CD14-positive monocyte (primary cell): ENCODE measurements at regions of chr20 and their contacts with region 1.

Region 1: GRCh38 chr20:33719989-33720709 is at the start of gene PXMP4:
- DNase-seq: peak; percentile 95 to 99 (median 96)
- H3K4me3 ChIP-seq: peak within 1 kb of the TSS; percentile 60 to 90 (median 79)
- H3K4me3 Mint-ChIP-seq: peak within 1 kb of the TSS; percentile 91 to 96
- H3K27ac ChIP-seq: peak within 1 kb of the TSS; percentile 60 to 84
- H3K27ac Mint-ChIP-seq: peak within 1 kb of the TSS; percentile 85 to 95 (median 89)
- H3K4me1 ChIP-seq: peaks cover 23 to 32% of the 10 kb centered on the region in 2 donors
- H3K4me1 Mint-ChIP-seq: peaks cover 43% of the 10 kb centered on the region
- H3K27me3 ChIP-seq: no peaks in the 10 kb centered on the region
- H3K27me3 Mint-ChIP-seq: peaks cover 0 to 4% (median 3%) of the 10 kb centered on the region in 3 donors
- CTCF ChIP-seq: no peak
- polyA plus RNA-seq, gene PXMP4: 4.9 to 11.4 (median 9.0) TPM

Region 2: GRCh38 chr20:33686100-33686983 is 33.8 kb before region 1 on chr20 and contains the start of gene E2F1:
- intact Hi-C with region 1: loop called in 1 of 2 experiments (anchors 5 kb)
- DNase-seq: peak; percentile 86 to 93 (median 89)
- H3K4me3 ChIP-seq: peak within 1 kb of the TSS; percentile 10 to 72 (median 32)
- H3K4me3 Mint-ChIP-seq: peak within 1 kb of the TSS; percentile 79 to 94
- H3K27ac ChIP-seq: peak within 1 kb of the TSS in 1 of 2 donors; percentile 52
- H3K27ac Mint-ChIP-seq: peak within 1 kb of the TSS; percentile 73 to 92 (median 86)
- H3K4me1 ChIP-seq: peaks cover 30 to 50% of the 10 kb centered on the region in 2 donors
- H3K4me1 Mint-ChIP-seq: peaks cover 51% of the 10 kb centered on the region
- H3K27me3 ChIP-seq: no peaks in the 10 kb centered on the region
- H3K27me3 Mint-ChIP-seq: peaks cover 0 to 2% (median 0%) of the 10 kb centered on the region in 3 donors
- CTCF ChIP-seq: peak; percentile 26
- polyA plus RNA-seq, gene E2F1: 0.17 to 1.1 TPM in 2 of 3 donors, not detected in the other